Activated T-helper 1 cell treated with anti-CD3 and anti-CD28 coated beads, Interleukin-12 subunit alpha, Interleukin-12 subunit beta, Interleukin-2, Interleukin-4 antibody, amounts not matched to agents 30 ng/mL and 10 ng/mL and 1 ng/mL, durations not matched to agents 14 hours and 24 hours and 36 hours (primary cell): ENCODE measurements at regions of chr9 and their contacts with region 1.

Region 1: DNA sequence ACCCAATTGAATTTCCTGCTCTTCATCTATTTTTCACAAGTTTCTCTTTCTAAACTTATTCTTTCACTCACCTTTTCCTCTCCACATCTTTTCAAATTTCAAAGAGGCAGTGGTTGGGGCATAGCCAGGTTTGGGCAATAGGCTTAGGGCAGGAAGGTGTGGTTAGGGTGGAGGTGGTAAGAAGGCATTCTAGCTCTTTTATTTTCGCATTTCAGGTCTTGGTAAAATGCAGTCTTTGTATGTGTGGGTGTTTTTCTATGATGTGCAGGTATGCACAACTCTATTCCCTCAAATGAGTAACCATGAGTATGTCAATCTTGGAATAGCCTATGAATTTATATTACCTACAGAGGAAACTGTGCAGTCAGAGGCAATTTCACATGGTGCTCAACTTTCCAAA is 129.8 kb upstream of the IFNE start:
- DNase-seq: peak; percentile 11
- H3K4me3 Mint-ChIP-seq: no peak overlapping the region
- H3K27ac Mint-ChIP-seq: peak overlapping the region; percentile 16
- H3K4me1 Mint-ChIP-seq: peaks cover 36% of the 10 kb centered on the region
- H3K27me3 Mint-ChIP-seq: peaks cover 3% of the 10 kb centered on the region

Region 2: DNA sequence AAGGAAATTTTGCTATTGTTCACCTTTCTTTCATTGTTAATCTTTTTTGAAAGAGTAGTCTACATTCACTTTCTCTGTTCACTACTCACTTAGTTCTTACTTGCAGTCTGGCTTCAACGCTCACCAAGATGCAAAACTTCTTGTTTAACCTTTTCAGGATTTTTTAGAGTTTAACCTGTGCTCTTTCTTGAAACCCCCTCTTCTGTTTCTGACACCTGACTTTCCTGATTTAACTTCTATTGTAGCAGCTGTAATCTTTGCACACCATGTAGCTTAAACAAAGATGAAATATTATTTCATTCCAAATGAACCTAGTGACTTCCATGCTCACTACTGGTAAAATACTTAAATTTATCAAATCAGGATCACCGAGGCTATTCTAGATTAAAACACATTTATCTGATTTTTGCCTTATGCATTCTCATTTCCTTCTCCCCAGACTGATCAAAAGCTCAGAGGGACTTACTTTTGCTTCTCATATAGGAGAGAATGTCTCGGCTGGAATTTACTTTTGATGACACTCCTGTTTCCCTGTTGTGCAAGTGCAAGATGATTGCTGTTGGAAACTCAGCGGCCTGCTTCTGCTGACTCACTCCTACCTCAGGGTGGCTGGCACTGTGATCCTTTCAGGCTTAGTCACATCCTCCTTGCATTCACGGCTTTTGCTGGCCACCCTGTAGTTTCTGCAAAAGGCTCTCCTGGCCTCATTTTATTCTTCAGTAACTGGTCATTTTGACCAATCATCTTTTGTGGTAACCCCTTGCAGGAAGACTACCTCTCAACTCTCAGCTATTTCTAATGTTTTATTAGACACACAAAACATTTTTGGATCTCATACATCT is 20.5 kb before region 1 on chr9:
- intact Hi-C with region 1: loop called (anchors 1 kb)
- DNase-seq: peak; percentile 24
- H3K4me3 Mint-ChIP-seq: no peak overlapping the region
- H3K27ac Mint-ChIP-seq: peak overlapping the region; percentile 40
- H3K4me1 Mint-ChIP-seq: peaks cover 14% of the 10 kb centered on the region
- H3K27me3 Mint-ChIP-seq: peaks cover 7% of the 10 kb centered on the region

Region 3: GRCh38 chr9:21653091-21653490 is 41.2 kb after region 1 on chr9:
- intact Hi-C with region 1: no loop called
- DNase-seq: no peak
- H3K4me3 Mint-ChIP-seq: no peak overlapping the region
- H3K27ac Mint-ChIP-seq: no peak overlapping the region
- H3K4me1 Mint-ChIP-seq: no peaks in the 10 kb centered on the region
- H3K27me3 Mint-ChIP-seq: peaks cover 2% of the 10 kb centered on the region